HCT116 (cell line): ENCODE measurements at regions of chr9 and their contacts with region 1.

Region 1: DNA sequence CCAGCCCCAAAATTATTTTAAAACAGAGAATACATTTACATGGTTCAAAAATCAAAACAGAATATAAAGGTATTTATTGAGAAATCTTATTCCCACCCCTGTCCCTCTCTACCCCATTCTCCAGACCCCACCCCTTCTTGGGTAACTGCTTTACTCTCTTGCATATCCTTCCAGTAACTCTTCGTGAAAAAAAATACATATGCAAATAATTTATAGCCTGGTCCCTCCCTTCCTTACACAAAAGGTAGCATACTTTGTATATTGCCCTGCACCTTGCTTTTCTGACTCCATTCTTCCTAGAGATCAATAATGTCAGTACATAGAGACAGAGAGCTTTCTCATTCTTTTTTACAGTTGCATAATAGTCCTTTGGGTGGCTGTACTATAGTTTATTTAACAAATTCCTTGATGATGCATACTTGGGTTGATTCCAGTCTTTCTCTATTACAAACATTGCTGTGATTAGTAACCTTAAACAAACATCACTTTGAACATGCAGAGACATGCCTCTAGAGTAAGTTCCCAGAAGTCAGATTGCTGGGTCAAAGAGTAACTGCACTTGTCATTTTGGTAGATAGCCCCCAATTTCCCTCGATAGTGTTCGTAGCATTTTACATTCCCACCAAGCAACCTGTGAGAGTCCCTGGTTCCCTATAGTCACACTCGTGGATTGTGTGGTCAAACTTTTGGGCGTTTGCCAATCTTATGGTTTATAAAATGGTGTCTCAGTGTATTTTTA is 47.8 kb downstream of the STOM start:
- DNase-seq: peak; percentile 44
- ATAC-seq: peak; percentile 24
- H3K4me3 ChIP-seq: no peak overlapping the region
- H3K27ac ChIP-seq: no peak overlapping the region
- H3K4me1 ChIP-seq: peaks cover 23 to 41% of the 10 kb centered on the region in 2 experiments
- H3K27me3 ChIP-seq: no peaks in the 10 kb centered on the region
- CTCF ChIP-seq: no peak
- POLR2A ChIP-seq: no peak
- RAD21 ChIP-seq: no peak

Region 2: DNA sequence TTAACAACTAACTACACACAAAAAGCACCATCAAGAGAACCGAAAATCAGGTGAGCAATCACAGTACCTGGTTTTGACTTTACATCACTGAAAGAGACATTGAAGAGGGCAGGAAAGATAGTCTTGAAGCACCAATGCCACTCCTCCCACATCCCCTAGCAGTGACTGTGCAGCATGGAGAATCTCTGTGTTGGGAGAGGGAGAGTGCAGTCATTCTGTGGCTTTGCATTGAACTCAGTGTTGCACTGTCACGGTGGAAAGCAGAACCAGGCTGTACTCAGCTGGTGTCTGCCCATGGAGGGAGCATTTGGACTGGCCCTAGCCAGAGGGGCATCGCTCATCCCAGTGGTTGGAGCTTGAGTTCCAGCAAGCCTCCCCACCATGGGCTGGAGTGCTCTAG is 312.6 kb before region 1 on chr9:
- CTCF ChIA-PET with region 1: no interaction called
- POLR2A ChIA-PET with region 1: no interaction called
- RAD21 ChIA-PET with region 1: no interaction called
- intact Hi-C with region 1: no loop called
- DNase-seq: no peak
- ATAC-seq: no peak
- H3K4me3 ChIP-seq: no peak overlapping the region
- H3K27ac ChIP-seq: no peak overlapping the region
- H3K4me1 ChIP-seq: no peaks in the 10 kb centered on the region
- H3K27me3 ChIP-seq: no peaks in the 10 kb centered on the region
- CTCF ChIP-seq: no peak
- POLR2A ChIP-seq: no peak
- RAD21 ChIP-seq: no peak

Region 3: GRCh38 chr9:121213136-121213806 is 108.9 kb before region 1 on chr9:
- CTCF ChIA-PET with region 1: interaction called, 24 read pairs
- POLR2A ChIA-PET with region 1: no interaction called
- RAD21 ChIA-PET with region 1: interaction called in 1 of 2 experiments, 3 read pairs
- intact Hi-C with region 1: loop called (anchors 1 kb)
- DNase-seq: peak; percentile 77
- ATAC-seq: peak; percentile 98
- H3K4me3 ChIP-seq: no peak overlapping the region
- H3K27ac ChIP-seq: no peak overlapping the region
- H3K4me1 ChIP-seq: peaks cover 0 to 8% of the 10 kb centered on the region in 2 experiments; a peak in 2 of 4 replicates
- H3K27me3 ChIP-seq: no peaks in the 10 kb centered on the region
- CTCF ChIP-seq: peak; percentile 94 to 96 (median 94)
- POLR2A ChIP-seq: no peak
- RAD21 ChIP-seq: peak; percentile 99

Region 4: DNA sequence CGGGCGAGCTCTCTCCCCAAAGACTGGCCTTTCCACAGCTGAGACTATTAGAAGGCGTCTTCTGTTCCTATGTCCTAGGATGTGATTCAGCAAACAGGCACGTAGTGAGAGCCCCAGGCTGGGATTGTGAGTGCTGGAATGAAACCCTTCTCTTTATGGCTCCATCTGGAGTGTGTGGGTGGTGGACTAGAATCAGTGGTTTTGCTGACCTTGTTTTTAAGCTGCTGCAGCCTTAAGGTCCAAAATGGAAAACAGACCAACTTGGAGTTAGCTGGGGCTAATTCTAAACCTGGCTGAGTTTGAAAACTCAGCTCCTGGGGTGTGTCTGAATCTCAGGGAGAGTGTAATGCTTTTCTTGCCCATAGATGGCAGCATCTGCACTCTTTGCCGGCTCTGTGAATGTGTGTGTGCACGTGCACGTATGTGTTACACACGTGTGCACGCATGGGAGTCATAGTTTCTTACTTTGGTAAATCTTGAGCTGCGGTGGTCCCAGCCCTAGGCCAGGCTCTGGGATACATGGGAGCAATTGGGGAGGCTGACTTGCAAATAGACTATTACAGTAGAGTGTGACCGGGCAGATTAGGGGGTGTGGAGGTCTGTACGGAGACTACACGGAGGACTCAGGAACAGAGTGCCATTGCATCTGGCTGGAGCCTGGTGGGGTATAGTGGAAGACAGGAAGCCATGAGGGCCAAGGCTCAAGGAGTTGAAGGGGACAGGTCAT is 43.5 kb before region 1 on chr9:
- CTCF ChIA-PET with region 1: interaction called, 20 read pairs
- POLR2A ChIA-PET with region 1: interaction called, 3 read pairs
- RAD21 ChIA-PET with region 1: interaction called in 1 of 2 experiments, 3 read pairs
- intact Hi-C with region 1: loop called (anchors 1 kb)
- DNase-seq: peak; percentile 59
- ATAC-seq: peak; percentile 68
- H3K4me3 ChIP-seq: peak overlapping the region; percentile 0 to 43; a peak in 2 of 4 replicates
- H3K27ac ChIP-seq: peak overlapping the region; percentile 56
- H3K4me1 ChIP-seq: peaks cover 61 to 74% of the 10 kb centered on the region in 2 experiments
- H3K27me3 ChIP-seq: no peaks in the 10 kb centered on the region
- CTCF ChIP-seq: peak in 2 of 3 experiments; percentile 84 to 89; a peak in 4 of 6 replicates
- POLR2A ChIP-seq: no peak
- RAD21 ChIP-seq: no peak

Region 5: DNA sequence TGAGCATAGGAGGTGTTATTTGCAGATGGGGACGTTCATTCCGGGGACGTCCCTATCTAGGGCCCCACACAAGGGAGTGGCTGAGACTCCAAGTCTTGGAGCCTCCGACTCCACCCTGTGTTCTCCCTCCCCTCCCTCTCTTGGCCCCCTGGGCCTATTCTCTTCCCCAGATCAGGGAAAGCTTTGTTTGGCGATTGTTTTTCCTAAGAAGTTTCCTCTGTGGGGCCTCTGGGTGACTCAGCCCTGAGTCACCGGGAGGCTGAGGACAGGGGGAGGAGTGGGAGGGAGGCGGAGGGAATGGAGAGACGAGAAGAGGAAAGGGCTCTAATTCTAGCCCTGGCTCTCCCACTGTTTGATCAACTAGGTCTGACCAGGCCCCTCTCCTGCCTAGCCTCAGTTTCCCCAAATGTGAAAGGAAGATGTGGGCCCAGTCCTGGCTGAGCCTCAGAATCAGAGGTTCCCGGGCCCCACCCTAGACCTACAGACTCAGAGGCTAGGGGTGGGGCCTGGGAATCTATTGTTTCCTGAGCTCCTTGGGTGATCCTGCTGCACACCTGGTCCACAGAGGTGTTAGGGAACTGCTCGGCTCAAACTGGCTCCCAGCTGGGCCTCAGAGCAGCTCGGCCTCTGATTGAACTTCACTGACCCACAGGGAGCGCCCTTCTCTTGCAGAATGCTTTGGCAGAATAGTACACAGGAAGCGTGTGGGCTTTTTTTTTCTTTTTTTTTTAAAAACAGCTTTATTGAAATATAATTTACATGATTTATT is 35.0 kb before region 1 on chr9:
- CTCF ChIA-PET with region 1: interaction called, 24 read pairs
- POLR2A ChIA-PET with region 1: interaction called, 5 read pairs
- RAD21 ChIA-PET with region 1: no interaction called
- intact Hi-C with region 1: no loop called
- DNase-seq: peak; percentile 98
- ATAC-seq: peak; percentile 86
- H3K4me3 ChIP-seq: peak overlapping the region; percentile 39 to 52
- H3K27ac ChIP-seq: peak overlapping the region; percentile 99
- H3K4me1 ChIP-seq: peaks cover 77 to 81% of the 10 kb centered on the region in 2 experiments
- H3K27me3 ChIP-seq: no peaks in the 10 kb centered on the region
- CTCF ChIP-seq: peak in 2 of 3 experiments; percentile 39 to 45; a peak in 4 of 6 replicates
- POLR2A ChIP-seq: peak; percentile 11
- RAD21 ChIP-seq: no peak

Region 6: DNA sequence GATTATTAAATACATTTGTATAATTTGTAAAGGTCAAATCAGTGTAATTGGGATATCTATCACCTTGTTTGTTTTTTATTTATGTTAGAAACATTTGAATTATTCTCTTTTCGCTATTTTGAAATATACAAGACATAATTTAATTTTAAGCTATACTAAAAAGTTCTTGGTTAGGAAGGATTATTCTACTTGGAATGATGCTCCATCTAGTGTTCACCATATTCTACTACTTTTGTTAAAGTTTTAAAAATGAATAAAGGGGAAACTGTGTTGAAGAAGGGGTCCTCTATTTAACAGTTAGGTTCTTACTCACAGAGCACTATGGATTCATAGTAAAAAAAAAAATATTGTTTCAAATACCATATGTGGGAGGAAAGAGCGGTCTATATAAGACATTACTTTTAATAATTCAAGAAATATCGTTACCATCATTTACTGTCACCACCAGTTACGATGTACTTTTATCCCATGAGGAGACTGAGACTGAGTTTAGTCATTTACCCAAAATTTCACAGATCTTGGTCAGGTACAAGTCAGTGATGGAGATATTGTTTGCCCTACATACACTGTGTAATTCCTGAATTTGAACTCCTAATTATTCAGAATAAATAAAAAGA is 54.1 kb after region 1 on chr9:
- CTCF ChIA-PET with region 1: interaction called, 37 read pairs
- POLR2A ChIA-PET with region 1: no interaction called
- RAD21 ChIA-PET with region 1: no interaction called
- intact Hi-C with region 1: loop called (anchors 1 kb)
- DNase-seq: no peak
- ATAC-seq: no peak
- H3K4me3 ChIP-seq: no peak overlapping the region
- H3K27ac ChIP-seq: no peak overlapping the region
- H3K4me1 ChIP-seq: no peaks in the 10 kb centered on the region
- H3K27me3 ChIP-seq: no peaks in the 10 kb centered on the region
- CTCF ChIP-seq: peak; percentile 19 to 93 (median 54); a peak in 5 of 6 replicates
- POLR2A ChIP-seq: no peak
- RAD21 ChIP-seq: peak; percentile 78

Region 7: DNA sequence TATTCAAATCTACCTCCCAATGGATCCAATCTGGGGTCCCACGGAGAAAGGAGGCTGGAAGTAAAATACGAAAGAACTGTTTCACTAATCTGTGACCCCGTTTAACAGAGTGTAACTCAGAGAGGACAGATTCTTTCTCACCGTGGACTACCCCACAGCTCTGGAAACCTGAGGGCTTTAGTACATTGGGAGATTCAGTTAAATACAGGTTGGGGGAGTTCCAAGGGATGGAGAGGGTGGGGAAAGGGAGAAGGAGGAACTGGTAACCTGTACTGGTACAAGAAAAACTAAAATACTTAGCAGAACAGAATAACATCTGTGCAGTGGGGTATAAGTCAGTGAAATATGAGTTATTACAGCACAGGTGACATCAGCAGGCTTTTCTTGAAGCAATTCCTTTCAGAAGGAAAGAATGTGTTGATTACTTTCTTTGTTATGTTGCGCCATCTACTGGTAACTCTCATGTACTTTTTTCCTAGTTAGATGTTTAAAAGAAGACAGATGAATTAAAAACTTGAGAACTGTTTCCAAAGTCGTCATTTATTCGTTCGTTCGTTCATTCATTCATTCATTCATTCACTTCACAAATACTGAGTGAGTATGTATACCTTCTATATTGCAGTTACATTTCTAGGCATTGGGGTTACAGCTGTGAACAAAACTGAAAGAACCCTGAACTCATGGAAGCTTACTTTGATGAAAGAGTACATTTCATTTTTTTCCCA is 77.8 kb after region 1 on chr9:
- CTCF ChIA-PET with region 1: interaction called, 42 read pairs
- POLR2A ChIA-PET with region 1: no interaction called
- RAD21 ChIA-PET with region 1: interaction called, 3 to 9 read pairs
- intact Hi-C with region 1: loop called (anchors 1 kb)
- DNase-seq: peak; percentile 74
- ATAC-seq: peak; percentile 84
- H3K4me3 ChIP-seq: no peak overlapping the region
- H3K27ac ChIP-seq: no peak overlapping the region
- H3K4me1 ChIP-seq: peaks cover 0 to 3% of the 10 kb centered on the region in 2 experiments; a peak in 1 of 4 replicates
- H3K27me3 ChIP-seq: no peaks in the 10 kb centered on the region
- CTCF ChIP-seq: peak; percentile 41 to 93 (median 73)
- POLR2A ChIP-seq: no peak
- RAD21 ChIP-seq: peak; percentile 91

Region 8: GRCh38 chr9:121538246-121538645 is 216.0 kb after region 1 on chr9:
- CTCF ChIA-PET with region 1: interaction called, 3 read pairs
- POLR2A ChIA-PET with region 1: no interaction called
- RAD21 ChIA-PET with region 1: no interaction called
- intact Hi-C with region 1: loop called (anchors 1 kb)
- DNase-seq: peak; percentile 48
- ATAC-seq: peak; percentile 97
- H3K4me3 ChIP-seq: no peak overlapping the region
- H3K27ac ChIP-seq: no peak overlapping the region
- H3K4me1 ChIP-seq: no peaks in the 10 kb centered on the region; a peak in 1 of 4 replicates
- H3K27me3 ChIP-seq: no peaks in the 10 kb centered on the region
- CTCF ChIP-seq: peak; percentile 37 to 73 (median 47); a peak in 5 of 6 replicates
- POLR2A ChIP-seq: no peak
- RAD21 ChIP-seq: peak; percentile 84